IMR-90 (cell line): ENCODE measurements at regions of chr4 and their contacts with region 1.

Region 1: GRCh38 chr4:78644744-78645330 is 93.3 kb downstream of the ANXA3 start:
- DNase-seq: peak; percentile 86
- ATAC-seq: peak; percentile 74
- H3K4me3 ChIP-seq: no peak overlapping the region
- H3K27ac ChIP-seq: peak overlapping the region; percentile 99; the same call in 1 of the 2 replicates
- H3K4me1 ChIP-seq: peaks cover 6% of the 10 kb centered on the region
- H3K27me3 ChIP-seq: no peaks in the 10 kb centered on the region
- CTCF ChIP-seq: peak; percentile 87
- POLR2A ChIP-seq: no peak
- RAD21 ChIP-seq: peak; percentile 74

Region 2: DNA sequence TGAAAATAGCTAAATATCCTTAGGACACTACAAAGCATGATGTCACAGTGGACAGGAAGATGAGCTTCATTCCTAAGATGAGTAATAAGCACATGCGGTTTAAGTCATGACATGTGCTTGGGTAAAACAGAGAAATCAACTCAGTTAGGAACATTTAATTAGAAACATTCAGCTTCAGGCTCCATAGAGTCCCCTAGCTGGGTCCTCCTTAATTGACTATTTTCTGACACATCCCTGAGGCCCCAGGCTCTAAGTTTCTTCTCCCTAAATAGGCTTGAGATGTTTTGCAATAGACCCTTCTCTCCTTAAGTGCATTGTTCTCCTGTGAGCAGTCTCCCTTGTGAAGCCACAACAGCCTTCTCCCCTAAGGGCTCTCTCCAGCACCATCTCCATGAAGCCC is 163.7 kb before region 1 on chr4:
- CTCF ChIA-PET with region 1: no interaction called
- POLR2A ChIA-PET with region 1: no interaction called
- dilution Hi-C with region 1: no loop called
- in situ Hi-C with region 1: no loop called
- intact Hi-C with region 1: no loop called
- DNase-seq: peak; percentile 84
- ATAC-seq: peak; percentile 69
- H3K4me3 ChIP-seq: no peak overlapping the region
- H3K27ac ChIP-seq: no peak overlapping the region
- H3K4me1 ChIP-seq: peaks cover 2% of the 10 kb centered on the region; the same call in 1 of the 2 replicates
- H3K27me3 ChIP-seq: no peaks in the 10 kb centered on the region; the same call in 1 of the 2 replicates
- CTCF ChIP-seq: no peak
- POLR2A ChIP-seq: no peak
- RAD21 ChIP-seq: no peak

Region 3: GRCh38 chr4:78534286-78534955 is 110.4 kb before region 1 on chr4:
- CTCF ChIA-PET with region 1: no interaction called
- POLR2A ChIA-PET with region 1: interaction called, 16 read pairs
- dilution Hi-C with region 1: no loop called
- in situ Hi-C with region 1: no loop called
- intact Hi-C with region 1: no loop called
- DNase-seq: peak; percentile 28
- ATAC-seq: peak; percentile 36; the same call in 1 of the 2 replicates
- H3K4me3 ChIP-seq: no peak overlapping the region
- H3K27ac ChIP-seq: no peak overlapping the region
- H3K4me1 ChIP-seq: peaks cover 5% of the 10 kb centered on the region
- H3K27me3 ChIP-seq: no peaks in the 10 kb centered on the region
- CTCF ChIP-seq: no peak
- POLR2A ChIP-seq: no peak
- RAD21 ChIP-seq: no peak

Region 4: DNA sequence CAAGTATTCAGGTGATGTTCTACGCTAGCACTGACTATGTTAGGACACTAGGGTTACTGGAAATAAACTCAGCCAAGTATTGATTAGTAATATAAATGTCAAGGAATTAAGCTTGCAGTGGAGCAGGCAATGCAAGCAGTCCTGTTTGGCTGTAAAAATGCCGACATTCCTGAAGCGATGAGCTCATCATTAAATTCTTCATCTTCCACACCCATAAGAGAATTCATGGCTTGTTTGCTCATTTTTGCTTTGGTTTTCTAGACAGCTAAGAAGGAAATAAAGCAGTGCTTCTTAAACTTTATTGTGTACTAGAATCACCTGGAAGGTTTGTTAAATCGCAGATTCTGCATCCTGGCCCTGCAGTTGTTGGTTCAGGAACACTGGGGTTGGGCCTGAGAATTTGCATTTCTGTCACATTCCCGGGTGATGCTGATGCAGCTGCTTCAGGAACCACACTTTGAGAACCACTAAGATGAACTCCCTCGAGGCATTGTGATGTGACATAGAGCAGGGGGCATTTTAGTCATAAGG is 75.5 kb before region 1 on chr4:
- CTCF ChIA-PET with region 1: no interaction called
- POLR2A ChIA-PET with region 1: no interaction called
- dilution Hi-C with region 1: no loop called
- in situ Hi-C with region 1: no loop called
- intact Hi-C with region 1: loop called (anchors 5 kb)
- DNase-seq: peak; percentile 82
- ATAC-seq: peak; percentile 89
- H3K4me3 ChIP-seq: no peak overlapping the region
- H3K27ac ChIP-seq: peak overlapping the region; percentile 74
- H3K4me1 ChIP-seq: peaks cover 11% of the 10 kb centered on the region
- H3K27me3 ChIP-seq: no peaks in the 10 kb centered on the region
- CTCF ChIP-seq: no peak
- POLR2A ChIP-seq: no peak
- RAD21 ChIP-seq: no peak